ENCODE measurements at regions of chr9 and their contacts with region 1.

Region 1: GRCh38 chr9:89015340-89015739 is 24.1 kb downstream of the S1PR3 start:
- DNase-seq: no peak
- H3K4me3 ChIP-seq: no peak overlapping the region
- H3K27ac ChIP-seq: no peak overlapping the region
- H3K4me1 ChIP-seq: peaks cover 0 to under 1% of the 10 kb centered on the region in 2 donors
- H3K27me3 ChIP-seq: no peaks in the 10 kb centered on the region
- CTCF ChIP-seq: no peak
- POLR2A ChIP-seq: no peak

Region 2: DNA sequence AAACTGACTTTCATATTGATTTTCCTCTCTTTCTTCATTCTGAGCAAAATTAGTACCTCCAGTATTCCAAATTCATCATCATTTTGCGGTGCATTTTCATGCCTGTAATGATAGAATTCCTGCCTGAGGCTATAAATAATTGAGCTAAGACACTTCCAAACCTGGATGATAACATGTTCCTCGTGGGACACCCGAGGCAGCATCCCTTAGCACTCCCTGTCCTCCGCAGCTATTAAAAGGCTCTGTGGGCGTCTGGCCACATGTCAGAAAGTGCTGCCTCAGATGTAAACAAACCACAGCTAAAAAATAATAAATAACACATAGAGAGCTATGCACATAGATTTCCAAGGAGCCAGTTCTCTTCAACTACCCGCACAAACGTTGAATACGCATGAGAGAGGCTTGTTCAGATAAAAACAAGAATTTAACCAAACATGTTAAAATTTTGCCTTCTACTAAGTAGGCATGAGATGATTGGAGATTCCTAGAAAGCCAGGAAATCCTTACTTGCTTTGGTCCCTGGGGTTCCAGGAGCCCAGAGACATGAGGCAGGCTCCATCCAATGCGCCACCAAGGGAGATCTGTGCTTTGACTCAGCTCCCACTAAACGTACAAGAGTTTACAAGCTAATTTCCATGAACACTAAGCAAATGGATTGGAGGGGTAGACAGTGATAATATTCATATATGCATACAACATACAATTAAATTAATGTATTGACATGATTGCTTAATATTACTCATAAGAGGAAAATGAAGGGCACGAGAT is 80.6 kb after region 1 on chr9:
- intact Hi-C with region 1: no loop called
- DNase-seq: no peak
- H3K4me3 ChIP-seq: no peak overlapping the region
- H3K27ac ChIP-seq: no peak overlapping the region
- H3K4me1 ChIP-seq: no peaks in the 10 kb centered on the region
- H3K27me3 ChIP-seq: no peaks in the 10 kb centered on the region
- CTCF ChIP-seq: no peak
- POLR2A ChIP-seq: no peak

Region 3: GRCh38 chr9:89278997-89279739 is 263.8 kb after region 1 on chr9:
- intact Hi-C with region 1: loop called (anchors 10 kb)
- DNase-seq: peak in 4 of 7 donors; percentile 30 to 61 (median 44)
- H3K4me3 ChIP-seq: no peak overlapping the region
- H3K27ac ChIP-seq: no peak overlapping the region
- H3K4me1 ChIP-seq: peaks cover 10 to 12% of the 10 kb centered on the region in 2 donors
- H3K27me3 ChIP-seq: no peaks in the 10 kb centered on the region
- CTCF ChIP-seq: peak; percentile 73 to 82 (median 78)
- POLR2A ChIP-seq: no peak